Activated T-helper 2 cell treated with anti-CD3 and anti-CD28 coated beads, Interferon-gamma antibody, Interleukin-2, Interleukin-4, amounts not matched to agents 10 μg/mL and 5 μg/mL and 100 μg/mL, durations not matched to agents 14 hours and 24 hours and 36 hours (primary cell): ENCODE measurements at regions of chr19 and their contacts with region 1.

Region 1: DNA sequence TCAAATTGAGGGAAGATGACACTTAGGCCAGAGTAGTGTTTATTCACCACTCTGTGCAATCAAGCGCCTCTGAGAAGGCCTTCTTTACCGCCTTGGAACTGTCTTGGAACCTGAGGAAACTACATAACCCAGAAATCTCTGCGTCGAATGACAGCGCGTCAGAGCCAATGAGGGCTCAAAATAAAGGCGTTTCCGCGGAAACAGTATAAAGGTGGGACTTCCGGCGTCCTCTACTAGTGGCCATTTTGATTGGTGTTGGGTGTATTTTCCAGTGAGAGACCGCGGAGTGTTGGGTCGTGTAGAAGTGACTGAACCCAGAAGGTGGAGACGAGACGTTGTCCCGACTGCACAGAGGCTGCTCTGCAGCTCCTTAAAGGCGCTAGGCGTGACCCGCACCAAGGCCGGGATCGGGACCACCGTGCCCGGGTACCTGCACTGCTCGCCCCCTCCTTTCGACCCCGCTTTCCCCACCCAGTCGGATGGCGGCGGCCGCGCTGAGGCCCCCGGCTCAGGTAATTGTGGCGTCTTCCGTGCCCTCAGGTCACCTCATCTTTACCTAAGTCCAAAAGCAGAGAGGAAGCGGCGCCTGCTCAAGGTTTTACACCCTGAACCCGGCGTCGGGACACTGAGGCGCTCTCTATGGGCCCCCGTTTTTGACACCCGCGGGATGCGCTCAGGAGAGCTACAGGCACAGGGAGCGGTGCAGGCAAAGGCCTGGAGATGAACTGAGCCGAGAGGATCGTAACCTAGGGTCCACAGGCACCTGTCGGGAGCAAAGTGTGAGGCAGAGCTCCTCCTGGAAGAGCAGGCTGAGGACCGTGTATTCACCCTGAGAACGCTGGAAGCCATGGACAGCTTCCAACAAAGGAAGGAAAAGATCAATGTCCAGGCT is at the start of gene ZNF776:
- DNase-seq: peak; percentile 78
- H3K4me3 Mint-ChIP-seq: peak within 1 kb of the TSS; percentile 97
- H3K27ac Mint-ChIP-seq: peak within 1 kb of the TSS; percentile 97
- H3K4me1 Mint-ChIP-seq: peaks cover 6% of the 10 kb centered on the region
- H3K27me3 Mint-ChIP-seq: no peaks in the 10 kb centered on the region
- total RNA-seq, gene ZNF776: 7.4 and 8.8 TPM in 2 replicates

Region 2: DNA sequence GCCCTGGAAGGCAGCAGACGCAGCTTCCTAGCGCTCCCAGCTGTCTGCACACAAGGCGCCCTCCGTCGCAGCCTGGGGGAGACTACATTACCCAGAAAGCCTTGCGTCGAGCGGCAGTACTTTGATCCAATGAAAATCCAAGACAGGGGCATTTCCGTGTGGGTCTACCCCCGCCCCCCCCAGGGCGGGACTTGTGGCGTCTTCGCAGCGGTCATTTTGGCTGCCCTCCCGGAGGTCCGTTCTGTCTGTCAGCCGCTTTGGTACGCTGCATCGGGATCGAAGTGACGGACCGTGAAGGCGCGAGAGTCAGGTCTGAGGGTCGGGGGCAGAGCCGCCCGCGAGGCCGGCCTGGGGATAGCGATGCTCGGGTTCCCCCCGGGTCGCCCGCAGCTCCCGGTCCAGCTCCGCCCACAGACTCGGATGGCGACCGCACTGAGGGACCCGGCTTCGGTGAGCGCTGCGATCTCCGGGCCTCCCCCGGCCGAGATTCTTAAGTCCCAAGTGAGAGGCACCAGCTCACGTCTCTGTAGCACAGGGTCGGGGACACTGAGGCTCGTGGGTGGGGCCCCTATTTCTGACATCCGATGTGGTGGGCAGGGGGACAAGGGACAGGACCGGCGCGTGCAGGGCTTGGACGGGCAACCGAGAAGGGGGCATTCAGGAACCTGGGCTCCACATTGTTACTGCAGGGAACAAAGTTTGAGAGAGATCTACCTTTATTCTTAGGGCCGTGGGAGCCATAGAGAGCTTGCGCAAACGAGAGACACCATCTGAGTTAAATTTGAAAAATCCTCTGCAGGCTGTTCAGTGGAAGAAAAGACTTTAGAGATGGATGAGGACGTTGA is 113.6 kb before region 1 on chr19 and contains the start of gene ZNF211:
- intact Hi-C with region 1: loop called (anchors 5 kb)
- DNase-seq: peak; percentile 78
- H3K4me3 Mint-ChIP-seq: peak within 1 kb of the TSS; percentile 91
- H3K27ac Mint-ChIP-seq: peak within 1 kb of the TSS; percentile 65
- H3K4me1 Mint-ChIP-seq: peaks cover 16% of the 10 kb centered on the region
- H3K27me3 Mint-ChIP-seq: no peaks in the 10 kb centered on the region
- total RNA-seq, gene ZNF211: 9.6 and 10.6 TPM in 2 replicates

Region 3: GRCh38 chr19:57682226-57682766 is 64.5 kb before region 1 on chr19:
- intact Hi-C with region 1: loop called (anchors 1 kb)
- DNase-seq: no peak
- H3K4me3 Mint-ChIP-seq: peak overlapping the region; percentile 93
- H3K27ac Mint-ChIP-seq: peak overlapping the region; percentile 85
- H3K4me1 Mint-ChIP-seq: peaks cover 22% of the 10 kb centered on the region
- H3K27me3 Mint-ChIP-seq: no peaks in the 10 kb centered on the region

Region 4: DNA sequence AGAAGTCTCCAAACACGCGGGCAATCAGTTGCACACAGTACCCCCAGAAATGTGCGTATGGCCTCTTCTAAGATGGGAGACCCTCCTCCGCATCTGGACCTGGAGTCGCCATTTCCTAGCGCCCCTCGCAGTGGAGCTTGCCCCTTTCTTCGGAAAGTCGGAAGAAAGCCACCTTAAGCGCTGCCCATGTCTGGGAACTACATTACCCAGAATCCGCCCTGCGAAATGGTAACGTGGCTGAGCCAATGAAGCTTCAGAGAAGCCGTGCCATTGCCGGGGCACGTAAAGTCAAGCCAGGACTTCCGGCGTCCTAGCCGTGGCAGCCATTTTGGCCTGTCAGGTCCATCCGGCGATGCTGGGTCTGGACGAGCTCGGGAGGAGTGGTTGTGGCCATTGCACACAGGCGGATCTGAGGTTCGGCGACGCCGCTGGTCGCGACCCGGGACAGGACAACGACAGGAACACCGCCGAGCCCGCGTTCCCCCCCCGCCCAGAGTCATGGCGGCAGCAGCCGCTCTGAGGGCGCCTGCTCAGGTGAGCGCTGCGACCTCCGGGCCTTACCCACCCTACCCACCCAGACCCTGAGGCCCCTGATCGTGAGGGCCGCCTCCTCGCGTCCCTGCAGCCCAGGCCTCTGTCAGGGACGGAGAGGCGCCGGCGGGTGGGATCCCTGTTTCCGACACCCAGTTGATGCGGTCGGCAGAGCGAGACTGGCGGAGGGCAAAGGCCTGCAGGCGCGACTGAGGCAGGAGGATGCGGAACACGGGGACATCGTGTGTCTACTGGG is 22.7 kb after region 1 on chr19 and contains the start of gene ZNF586:
- intact Hi-C with region 1: loop called (anchors 2 kb)
- DNase-seq: peak; percentile 82
- H3K4me3 Mint-ChIP-seq: peak within 1 kb of the TSS; percentile 89
- H3K27ac Mint-ChIP-seq: peak within 1 kb of the TSS; percentile 85
- H3K4me1 Mint-ChIP-seq: peaks cover 8% of the 10 kb centered on the region
- H3K27me3 Mint-ChIP-seq: no peaks in the 10 kb centered on the region
- total RNA-seq, gene ZNF586: 11.4 and 13.4 TPM in 2 replicates

Region 5: DNA sequence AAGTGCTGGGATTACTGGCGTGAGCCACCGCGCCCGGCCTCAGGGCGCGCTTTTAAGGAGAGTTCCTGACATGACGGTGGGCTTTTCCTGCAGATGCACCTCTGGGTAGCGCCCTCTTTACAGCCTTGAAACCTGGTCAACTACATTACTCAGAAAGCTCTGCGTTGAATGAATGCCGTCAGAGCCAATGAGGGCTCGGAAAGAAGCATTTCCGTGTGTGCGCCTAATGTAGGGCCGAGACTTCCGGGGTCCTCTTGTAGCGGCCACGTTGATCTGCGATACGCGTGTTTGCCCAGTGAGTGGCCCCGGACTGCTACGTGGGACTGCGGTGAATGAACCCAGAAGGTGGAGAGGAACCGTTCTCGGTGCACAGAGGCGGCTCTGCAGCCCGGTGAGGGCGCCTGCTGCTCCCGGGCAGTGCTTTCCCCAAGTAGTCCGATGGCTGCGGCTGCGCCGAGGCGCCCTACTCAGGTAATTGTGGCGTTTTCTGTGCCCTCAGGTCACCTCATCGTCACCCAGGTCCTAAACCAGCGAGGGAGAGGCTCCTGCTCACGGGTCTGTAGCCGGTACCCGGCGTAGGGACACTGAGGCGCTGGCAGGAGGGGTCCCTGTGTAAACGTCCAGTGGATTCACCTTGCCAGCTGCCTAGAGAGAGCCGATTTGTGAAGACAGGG is 72.8 kb after region 1 on chr19:
- intact Hi-C with region 1: loop called (anchors 1 kb)
- DNase-seq: peak; percentile 80
- H3K4me3 Mint-ChIP-seq: peak overlapping the region; percentile 95
- H3K27ac Mint-ChIP-seq: peak overlapping the region; percentile 99
- H3K4me1 Mint-ChIP-seq: peaks cover 39% of the 10 kb centered on the region
- H3K27me3 Mint-ChIP-seq: no peaks in the 10 kb centered on the region

Region 6: DNA sequence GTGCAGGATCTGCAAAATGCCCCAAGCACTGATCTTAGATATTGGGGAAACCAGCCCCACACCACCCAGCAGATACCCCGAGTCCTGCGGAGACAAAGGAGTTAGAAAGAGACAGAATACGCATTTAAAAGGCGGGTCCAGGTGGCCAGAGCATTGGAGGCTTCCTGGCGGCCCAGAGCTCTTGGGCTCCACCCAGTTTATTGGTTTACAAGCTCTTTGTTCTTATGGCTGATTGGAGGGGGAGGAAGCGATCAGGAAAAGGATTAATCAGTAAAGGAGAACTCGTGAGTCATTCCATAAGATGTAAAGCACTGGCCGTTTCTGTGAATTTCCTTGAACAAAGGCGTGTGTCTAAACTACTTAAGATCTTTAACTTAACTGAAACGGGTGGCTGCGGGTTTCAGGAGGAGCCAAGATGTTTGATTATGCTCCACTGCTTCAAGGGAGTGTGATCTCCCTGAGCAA is 103.8 kb after region 1 on chr19:
- intact Hi-C with region 1: no loop called
- DNase-seq: no peak
- H3K4me3 Mint-ChIP-seq: peak overlapping the region; percentile 92
- H3K27ac Mint-ChIP-seq: peak overlapping the region; percentile 91
- H3K4me1 Mint-ChIP-seq: peaks cover 19% of the 10 kb centered on the region
- H3K27me3 Mint-ChIP-seq: no peaks in the 10 kb centered on the region

Region 7: GRCh38 chr19:57914531-57914930 is 167.7 kb after region 1 on chr19:
- intact Hi-C with region 1: loop called (anchors 2 kb)
- DNase-seq: no peak
- H3K4me3 Mint-ChIP-seq: peak overlapping the region; percentile 94
- H3K27ac Mint-ChIP-seq: no peak overlapping the region
- H3K4me1 Mint-ChIP-seq: peaks cover 21% of the 10 kb centered on the region
- H3K27me3 Mint-ChIP-seq: no peaks in the 10 kb centered on the region

Region 8: GRCh38 chr19:58154679-58155648 is 408.1 kb after region 1 on chr19:
- intact Hi-C with region 1: loop called (anchors 10 kb)
- DNase-seq: peak; percentile 91
- H3K4me3 Mint-ChIP-seq: peak overlapping the region; percentile 72
- H3K27ac Mint-ChIP-seq: no peak overlapping the region
- H3K4me1 Mint-ChIP-seq: peaks cover 2% of the 10 kb centered on the region
- H3K27me3 Mint-ChIP-seq: no peaks in the 10 kb centered on the region